ENCODE measurements at regions of chr7 and their contacts with region 1.

Region 1: DNA sequence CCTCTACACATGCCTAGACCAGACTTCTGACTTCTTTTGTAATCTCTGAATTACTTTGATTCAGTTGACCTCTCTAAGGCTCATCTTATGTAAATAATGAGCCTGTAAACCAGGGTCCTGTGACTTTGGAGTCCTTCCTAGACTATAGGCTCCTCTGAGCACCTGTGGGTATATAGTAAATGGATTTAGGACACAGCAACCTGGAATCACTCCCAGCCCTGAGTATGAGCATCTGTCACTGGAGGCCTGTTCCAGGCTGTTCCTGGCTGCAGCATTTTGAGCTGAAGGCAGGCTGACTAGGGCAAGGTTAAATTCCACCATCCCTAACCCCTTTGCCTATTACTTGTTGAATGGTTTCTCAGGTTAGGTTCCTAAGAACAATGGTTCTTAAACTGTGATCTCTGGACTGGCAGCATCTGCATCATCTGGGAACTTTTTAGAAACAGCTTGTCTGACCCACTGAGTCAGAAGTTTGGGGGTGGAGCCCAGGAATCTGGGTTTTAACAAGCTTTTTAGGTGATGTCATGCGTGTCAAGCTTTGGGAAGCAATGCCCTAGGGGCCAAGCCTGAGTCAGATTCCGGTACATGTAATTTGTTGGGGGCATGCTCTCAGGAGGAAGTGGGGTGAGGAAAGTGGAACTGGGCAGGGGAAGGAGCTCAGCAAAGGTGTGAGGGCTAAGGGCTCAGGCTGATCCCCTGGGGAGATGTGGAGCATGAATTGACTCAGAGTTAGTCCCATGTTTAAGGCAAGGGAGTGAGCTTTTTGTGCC is 28.2 kb downstream of the MINDY4 start:
- DNase-seq: no peak
- H3K4me3 ChIP-seq: no peak overlapping the region
- H3K27ac ChIP-seq: peak overlapping the region; percentile 40 to 43
- H3K4me1 ChIP-seq: peaks cover 10 to 40% (median 31%) of the 10 kb centered on the region in 3 donors
- H3K27me3 ChIP-seq: no peaks in the 10 kb centered on the region
- CTCF ChIP-seq: no peak

Region 2: GRCh38 chr7:30974605-30975255 is 175.3 kb after region 1 on chr7:
- intact Hi-C with region 1: loop called (anchors 10 kb)
- DNase-seq: peak in 4 of 5 donors; percentile 55 to 73 (median 63)
- H3K4me3 ChIP-seq: no peak overlapping the region
- H3K27ac ChIP-seq: no peak overlapping the region
- H3K4me1 ChIP-seq: no peaks in the 10 kb centered on the region
- H3K27me3 ChIP-seq: no peaks in the 10 kb centered on the region
- CTCF ChIP-seq: peak; percentile 53

Region 3: DNA sequence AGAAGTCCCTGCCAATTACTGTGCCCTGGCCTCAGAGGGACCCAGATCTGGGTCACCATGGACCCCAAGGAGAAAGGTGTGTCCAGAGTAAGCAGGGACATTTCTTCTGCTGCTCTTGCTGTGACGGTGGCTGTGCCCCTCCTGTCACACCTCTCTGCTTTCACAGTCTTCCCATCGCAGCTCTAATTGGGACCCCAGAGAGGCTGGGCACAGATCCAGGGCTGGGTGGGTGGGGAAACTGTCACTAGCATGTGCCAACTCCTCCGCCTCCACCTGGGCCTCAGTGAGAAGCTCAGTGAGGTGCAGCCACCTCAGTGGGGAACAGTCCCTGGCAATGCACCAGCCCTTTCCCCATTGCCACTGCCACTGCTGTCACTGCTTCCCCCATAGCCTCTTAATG is 215.4 kb after region 1 on chr7:
- intact Hi-C with region 1: no loop called
- DNase-seq: no peak
- H3K4me3 ChIP-seq: no peak overlapping the region
- H3K27ac ChIP-seq: no peak overlapping the region
- H3K4me1 ChIP-seq: no peaks in the 10 kb centered on the region
- H3K27me3 ChIP-seq: no peaks in the 10 kb centered on the region
- CTCF ChIP-seq: no peak

Region 4: GRCh38 chr7:31122649-31123058 is 323.3 kb after region 1 on chr7:
- intact Hi-C with region 1: loop called (anchors 10 kb)
- DNase-seq: peak in 4 of 5 donors; percentile 67 to 85 (median 74)
- H3K4me3 ChIP-seq: no peak overlapping the region
- H3K27ac ChIP-seq: no peak overlapping the region
- H3K4me1 ChIP-seq: no peaks in the 10 kb centered on the region
- H3K27me3 ChIP-seq: no peaks in the 10 kb centered on the region
- CTCF ChIP-seq: peak; percentile 70

Region 5: DNA sequence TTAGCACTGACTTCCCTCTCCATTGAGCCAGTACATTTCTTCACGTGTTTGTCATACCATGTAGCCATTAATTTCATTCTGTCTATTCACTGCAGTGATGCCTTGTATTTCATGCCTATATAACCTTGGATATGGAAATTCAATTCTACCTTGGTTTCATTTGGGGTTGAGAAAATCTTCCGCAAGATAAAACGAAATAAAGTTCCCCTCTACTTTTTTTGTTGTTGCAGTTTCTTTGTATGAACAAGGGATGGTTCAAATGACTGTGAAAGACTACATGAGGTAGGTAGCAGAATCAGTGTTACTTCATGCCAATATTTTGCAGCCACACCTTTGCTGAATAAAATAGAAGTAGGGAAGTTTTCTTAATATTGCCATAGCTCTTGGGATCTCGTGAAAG is 770.1 kb after region 1 on chr7:
- intact Hi-C with region 1: no loop called
- DNase-seq: no peak
- H3K4me3 ChIP-seq: no peak overlapping the region
- H3K27ac ChIP-seq: no peak overlapping the region
- H3K4me1 ChIP-seq: no peaks in the 10 kb centered on the region
- H3K27me3 ChIP-seq: no peaks in the 10 kb centered on the region
- CTCF ChIP-seq: no peak